ENCODE measurements at regions of chr2 and their contacts with region 1.

Region 1: DNA sequence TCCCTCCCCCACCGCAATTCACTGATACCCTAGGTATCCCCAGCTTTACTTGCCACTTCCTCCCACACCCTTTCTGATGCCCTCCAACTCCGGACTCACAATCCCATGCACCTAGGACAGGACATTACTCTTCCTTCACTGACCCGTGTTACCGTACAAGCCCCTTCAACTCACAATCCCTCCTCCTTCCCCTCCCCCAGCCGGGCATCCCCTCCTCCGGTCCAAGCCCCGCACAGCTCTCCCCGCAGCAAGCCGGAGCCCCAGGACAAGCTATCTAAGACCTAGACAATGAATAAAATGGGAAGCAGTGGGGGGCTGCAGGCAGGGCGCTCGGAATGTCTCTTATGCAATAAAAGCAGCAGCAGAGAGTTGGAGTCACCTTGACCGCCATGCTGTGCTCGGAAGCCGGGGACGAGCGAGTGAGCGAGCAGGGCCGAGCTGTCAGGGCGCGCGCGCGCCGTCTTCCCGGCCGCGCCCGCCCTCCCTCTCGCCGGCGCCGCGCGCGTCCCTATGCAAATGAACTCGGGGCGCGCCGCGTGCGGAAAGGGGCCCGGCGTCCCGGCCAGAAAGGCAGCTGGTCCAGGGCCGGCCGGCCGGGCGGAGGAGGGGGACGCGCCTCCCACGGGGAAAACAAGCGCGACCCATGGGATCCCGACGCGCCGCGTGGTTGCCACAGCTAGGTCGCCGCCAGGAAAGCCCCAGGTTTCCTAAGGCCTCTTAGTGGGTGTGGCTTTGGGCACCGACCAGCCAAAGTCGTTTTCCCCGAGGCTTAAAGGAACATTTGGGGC is at the start of gene SLC25A12:
- DNase-seq: peak; percentile 66 to 85
- ATAC-seq: peak; percentile 97
- H3K4me3 ChIP-seq: peak within 1 kb of the TSS; percentile 95
- H3K4me3 Mint-ChIP-seq: peak within 1 kb of the TSS; percentile 98
- H3K27ac ChIP-seq: peak within 1 kb of the TSS; percentile 76
- H3K27ac Mint-ChIP-seq: peak within 1 kb of the TSS; percentile 41 to 92
- H3K4me1 ChIP-seq: peaks cover 11% of the 10 kb centered on the region
- H3K4me1 Mint-ChIP-seq: peaks cover 32 to 34% of the 10 kb centered on the region in 2 donors
- H3K27me3 ChIP-seq: no peaks in the 10 kb centered on the region
- H3K27me3 Mint-ChIP-seq: peaks cover 0 to 3% of the 10 kb centered on the region in 2 donors
- CTCF ChIP-seq: no peak
- total RNA-seq, gene SLC25A12: 18.7 to 21.7 (median 19.0) TPM

Region 2: DNA sequence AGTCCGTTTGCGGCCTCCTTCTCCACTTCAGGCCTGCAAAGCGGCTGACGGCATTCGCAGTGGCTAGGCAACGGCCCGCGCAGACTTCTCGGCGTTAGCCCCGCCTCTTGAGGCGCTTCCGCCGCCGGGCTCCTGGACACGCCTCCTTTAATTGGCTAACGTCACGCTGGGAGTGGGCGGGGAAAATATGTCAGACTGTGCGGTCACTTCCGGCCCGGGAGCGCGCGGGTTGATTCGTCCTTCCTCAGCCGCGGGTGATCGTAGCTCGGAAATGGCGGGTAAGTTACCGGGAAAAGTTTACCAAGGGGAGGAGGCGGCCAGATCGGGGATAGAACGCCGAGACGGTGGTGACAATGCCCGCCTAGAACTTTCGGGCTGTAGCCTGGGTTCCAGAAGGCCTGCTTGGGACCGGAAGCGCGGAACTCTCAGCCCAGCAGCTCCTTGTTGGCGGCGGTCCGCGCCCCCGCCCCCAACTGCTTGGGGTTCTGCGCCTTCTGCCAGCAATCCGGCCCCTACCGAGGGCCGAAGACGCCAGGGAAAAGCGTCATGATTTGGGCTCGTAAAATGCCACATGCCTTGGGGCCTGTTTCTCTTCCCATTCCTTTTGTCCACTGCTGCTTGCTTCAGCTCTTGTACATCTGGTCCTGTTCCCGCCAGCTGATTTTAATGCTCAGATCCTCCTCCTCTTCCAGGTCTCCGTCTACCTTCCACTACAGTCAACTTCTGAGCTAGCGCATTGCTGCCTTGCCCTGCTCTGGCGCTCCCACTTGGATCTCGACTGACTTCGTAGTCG is 28.4 kb after region 1 on chr2 and contains the start of gene HAT1:
- intact Hi-C with region 1: loop called (anchors 1 kb)
- DNase-seq: peak; percentile 98 to 99
- ATAC-seq: peak; percentile 97 to 99 (median 98)
- H3K4me3 ChIP-seq: peak within 1 kb of the TSS; percentile 68
- H3K4me3 Mint-ChIP-seq: peak within 1 kb of the TSS; percentile 98
- H3K27ac ChIP-seq: peak within 1 kb of the TSS; percentile 91
- H3K27ac Mint-ChIP-seq: peak within 1 kb of the TSS; percentile 93 to 95
- H3K4me1 ChIP-seq: peaks cover 16% of the 10 kb centered on the region
- H3K4me1 Mint-ChIP-seq: peaks cover 30 to 34% of the 10 kb centered on the region in 2 donors
- H3K27me3 ChIP-seq: no peaks in the 10 kb centered on the region
- H3K27me3 Mint-ChIP-seq: peaks cover 0 to 2% of the 10 kb centered on the region in 2 donors
- CTCF ChIP-seq: no peak
- total RNA-seq, gene HAT1: 29.7 to 32.7 (median 32.2) TPM

Measured in natural killer cell (primary cell).